K562 (cell line): ENCODE measurements at regions of chr3 and their contacts with region 1.

Region 1: DNA sequence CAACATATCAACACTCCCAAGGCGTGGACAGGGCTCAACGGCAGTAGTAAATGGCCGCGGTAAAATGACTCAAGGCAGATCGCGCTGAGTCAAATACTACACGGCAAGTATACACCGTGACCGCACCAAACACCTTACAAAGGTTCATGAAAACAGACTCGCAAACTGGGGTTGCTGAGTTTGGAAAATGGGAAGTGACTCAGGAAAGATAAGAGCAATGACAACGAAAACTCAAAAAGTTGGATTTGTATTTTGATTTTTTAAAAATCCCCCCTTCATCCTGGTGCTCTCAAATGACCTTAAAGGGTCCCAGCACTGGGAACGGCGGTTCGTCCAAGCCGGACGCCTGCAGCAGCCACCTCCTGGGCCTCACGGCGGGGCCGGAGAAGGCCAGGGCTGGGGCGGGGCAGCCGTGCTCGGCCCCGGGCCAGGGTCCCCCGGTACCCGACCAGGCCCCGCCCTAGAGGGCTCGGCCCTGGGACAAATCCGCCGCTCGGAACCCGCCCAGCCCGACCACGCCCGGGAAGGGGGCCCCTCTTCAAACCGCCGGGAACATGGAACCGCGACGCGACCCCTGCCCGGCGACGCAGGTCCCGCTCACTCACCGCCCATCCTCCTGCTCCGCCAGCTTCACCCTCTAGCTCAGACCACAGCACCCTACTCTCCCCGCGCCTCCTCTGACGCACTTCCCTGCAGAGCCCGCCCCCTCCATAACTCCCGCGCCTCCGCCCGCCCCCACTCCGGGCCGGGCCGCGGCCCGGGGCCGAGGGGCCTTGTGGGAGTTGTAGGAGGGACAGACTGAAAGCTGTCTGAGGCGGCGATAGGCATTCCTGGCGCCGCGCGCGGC is at the start of gene CLDND1:
- DNase-seq: peak; percentile 85 to 96 (median 90)
- ATAC-seq: peak; percentile 99
- H3K4me3 ChIP-seq: peak within 1 kb of the TSS; percentile 59
- H3K27ac ChIP-seq: peak within 1 kb of the TSS; percentile 81
- H3K4me1 ChIP-seq: peaks cover 0 to 7% of the 10 kb centered on the region in 2 experiments; a peak in 2 of 5 replicates
- H3K27me3 ChIP-seq: no peaks in the 10 kb centered on the region
- CTCF ChIP-seq: no peak
- EP300 ChIP-seq: no peak
- POLR2A ChIP-seq: peak; percentile 81
- RAD21 ChIP-seq: no peak
- polyA plus RNA-seq, gene CLDND1: 75.1 to 113 TPM

Region 2: DNA sequence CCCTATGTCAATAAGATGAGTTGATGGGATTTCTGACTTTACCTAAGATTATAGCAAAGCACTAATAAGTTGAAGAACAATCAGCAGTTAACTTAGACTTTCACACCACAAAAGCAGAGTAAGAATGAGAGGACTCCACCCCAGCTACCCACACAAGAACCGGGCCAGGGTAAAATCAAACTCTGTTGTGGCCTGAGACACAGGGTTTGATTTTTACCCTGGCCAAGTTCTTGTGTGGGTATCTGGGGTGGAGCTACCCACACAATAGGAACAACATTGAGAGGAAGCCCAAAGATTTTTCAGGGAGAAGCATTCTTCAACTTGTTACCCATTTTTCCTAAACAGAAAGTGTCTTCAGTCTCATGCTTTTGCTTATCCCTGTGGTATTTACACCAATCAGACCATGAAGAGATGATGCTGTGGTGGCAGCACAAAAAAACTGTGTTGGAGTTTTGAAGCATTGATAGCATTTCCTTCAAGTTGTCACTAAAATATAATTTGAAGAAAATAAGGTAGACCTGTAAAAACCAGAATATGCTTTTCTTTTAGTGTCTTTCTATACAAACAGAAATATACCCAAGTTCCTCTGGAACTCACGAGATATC is 45.3 kb after region 1 on chr3:
- CTCF ChIA-PET with region 1: no interaction called
- POLR2A ChIA-PET with region 1: no interaction called
- in situ Hi-C with region 1: no loop called
- intact Hi-C with region 1: loop called (anchors 2 kb)
- DNase-seq: no peak
- ATAC-seq: no peak
- H3K4me3 ChIP-seq: no peak overlapping the region
- H3K27ac ChIP-seq: no peak overlapping the region
- H3K4me1 ChIP-seq: no peaks in the 10 kb centered on the region
- H3K27me3 ChIP-seq: no peaks in the 10 kb centered on the region
- CTCF ChIP-seq: no peak
- EP300 ChIP-seq: no peak
- POLR2A ChIP-seq: no peak
- RAD21 ChIP-seq: no peak

Region 3: GRCh38 chr3:98588065-98588464 is 65.6 kb after region 1 on chr3:
- CTCF ChIA-PET with region 1: no interaction called
- POLR2A ChIA-PET with region 1: no interaction called
- in situ Hi-C with region 1: no loop called
- intact Hi-C with region 1: loop called (anchors 1 kb)
- DNase-seq: no peak
- ATAC-seq: no peak
- H3K4me3 ChIP-seq: no peak overlapping the region
- H3K27ac ChIP-seq: no peak overlapping the region
- H3K4me1 ChIP-seq: peaks cover 8 to 20% of the 10 kb centered on the region in 2 experiments
- H3K27me3 ChIP-seq: no peaks in the 10 kb centered on the region
- CTCF ChIP-seq: no peak
- EP300 ChIP-seq: no peak
- POLR2A ChIP-seq: no peak
- RAD21 ChIP-seq: no peak

Region 4: DNA sequence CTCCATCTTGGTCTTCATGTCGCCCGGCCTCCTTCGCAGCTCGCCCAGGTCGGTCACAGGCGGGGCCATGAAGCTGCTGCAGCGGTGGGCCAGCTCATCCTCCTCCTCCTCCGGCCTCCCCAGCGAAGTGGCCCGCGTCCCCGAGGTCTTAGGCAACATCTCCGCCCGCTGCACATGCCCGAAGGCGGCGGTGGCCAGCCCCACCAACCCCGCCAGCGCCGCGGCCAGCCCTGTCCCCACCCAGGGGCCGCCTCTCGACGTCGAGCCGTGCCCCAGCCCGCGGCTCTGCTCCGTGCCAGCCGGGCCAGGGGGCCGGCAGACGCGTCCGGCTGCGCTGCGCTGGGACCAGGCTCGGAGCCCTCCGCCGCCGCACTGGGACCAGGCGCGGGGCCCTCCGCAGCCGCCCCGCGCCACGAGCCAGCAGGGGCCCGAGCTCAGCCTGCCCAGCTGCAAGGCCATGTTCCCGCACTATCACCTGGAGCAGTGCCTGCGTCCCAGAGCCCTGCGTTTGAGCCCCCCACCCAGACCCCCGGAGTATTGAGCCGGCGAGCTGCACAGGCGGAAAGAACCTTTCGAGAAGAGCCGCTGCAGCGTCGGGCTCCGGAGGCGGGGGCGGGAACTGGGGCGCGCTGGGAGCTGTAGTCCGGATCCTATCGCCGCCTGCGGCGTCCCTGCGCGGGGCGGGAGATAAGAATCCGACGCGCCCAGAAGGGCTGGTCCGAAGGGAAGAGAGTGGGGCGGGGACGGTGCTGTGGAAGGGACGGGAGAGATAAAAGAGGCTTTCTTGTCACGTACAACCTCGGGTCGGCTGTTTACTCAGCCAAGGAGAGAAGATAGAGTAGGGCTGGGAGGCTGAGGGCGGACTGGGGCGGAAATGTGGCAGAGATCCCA is 70.8 kb after region 1 on chr3 and contains the start of gene CPOX:
- CTCF ChIA-PET with region 1: no interaction called
- POLR2A ChIA-PET with region 1: no interaction called
- in situ Hi-C with region 1: no loop called
- intact Hi-C with region 1: loop called (anchors 1 kb)
- DNase-seq: peak; percentile 74 to 95 (median 83)
- ATAC-seq: peak; percentile 98
- H3K4me3 ChIP-seq: peak within 1 kb of the TSS; percentile 83
- H3K27ac ChIP-seq: peak within 1 kb of the TSS; percentile 84
- H3K4me1 ChIP-seq: peaks cover 14 to 24% of the 10 kb centered on the region in 2 experiments; a peak in 4 of 5 replicates
- H3K27me3 ChIP-seq: no peaks in the 10 kb centered on the region
- CTCF ChIP-seq: no peak
- EP300 ChIP-seq: peak; percentile 51; the same call in 1 of the 2 replicates
- POLR2A ChIP-seq: peak; percentile 79
- RAD21 ChIP-seq: no peak
- polyA plus RNA-seq, gene CPOX: 14.6 to 17.4 TPM

Region 5: GRCh38 chr3:99269606-99270351 is 747.3 kb after region 1 on chr3:
- CTCF ChIA-PET with region 1: no interaction called
- POLR2A ChIA-PET with region 1: no interaction called
- in situ Hi-C with region 1: no loop called
- intact Hi-C with region 1: no loop called
- DNase-seq: no peak
- ATAC-seq: no peak
- H3K4me3 ChIP-seq: no peak overlapping the region
- H3K27ac ChIP-seq: no peak overlapping the region
- H3K4me1 ChIP-seq: no peaks in the 10 kb centered on the region
- H3K27me3 ChIP-seq: no peaks in the 10 kb centered on the region
- CTCF ChIP-seq: no peak
- EP300 ChIP-seq: no peak
- POLR2A ChIP-seq: no peak
- RAD21 ChIP-seq: no peak